Activated naive CD4-positive, alpha-beta T cell treated with anti-CD3 and anti-CD28 coated beads, Interleukin-2, amount 10 ng/mL, durations not matched to agents 7 days and 5 days (primary cell): ENCODE measurements at regions of chr5 and their contacts with region 1.

Region 1: DNA sequence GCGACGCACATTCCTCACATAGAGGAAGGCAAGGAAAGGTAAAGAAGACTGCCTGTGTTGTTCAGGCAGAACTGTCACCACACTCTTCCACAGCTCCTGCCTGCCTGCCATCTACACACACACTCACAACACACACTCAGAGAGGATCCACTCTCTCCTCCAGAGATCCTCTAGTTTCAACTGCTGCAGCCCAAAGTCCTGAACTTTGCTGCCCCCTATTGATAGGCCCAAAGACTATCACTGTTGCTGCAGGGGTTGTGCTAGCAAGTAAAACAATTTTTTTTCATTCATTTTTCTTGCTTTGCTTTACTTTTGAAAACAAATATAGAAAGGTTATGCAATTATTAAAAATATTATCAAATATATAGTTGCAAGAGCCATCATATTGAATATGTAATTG is 5.9 kb upstream of the CFAP90 start:
- DNase-seq: peak; percentile 64
- H3K4me3 Mint-ChIP-seq: no peak overlapping the region
- H3K27ac Mint-ChIP-seq: no peak overlapping the region
- H3K4me1 Mint-ChIP-seq: peaks cover 30% of the 10 kb centered on the region
- H3K27me3 Mint-ChIP-seq: peaks cover 15% of the 10 kb centered on the region

Region 2: GRCh38 chr5:7868773-7869473 is 12.1 kb after region 1 on chr5 and contains the starts of genes FASTKD3 and MTRR:
- CTCF ChIA-PET with region 1: interaction called, 28 read pairs
- DNase-seq: peak; percentile 94
- H3K4me3 Mint-ChIP-seq: peak within 1 kb of the TSS; percentile 86
- H3K27ac Mint-ChIP-seq: peak within 1 kb of the TSS; percentile 92
- H3K4me1 Mint-ChIP-seq: peaks cover 68% of the 10 kb centered on the region
- H3K27me3 Mint-ChIP-seq: no peaks in the 10 kb centered on the region

Region 3: GRCh38 chr5:7910738-7911428 is 54.0 kb after region 1 on chr5:
- CTCF ChIA-PET with region 1: no interaction called
- DNase-seq: no peak
- H3K4me3 Mint-ChIP-seq: no peak overlapping the region
- H3K27ac Mint-ChIP-seq: no peak overlapping the region
- H3K4me1 Mint-ChIP-seq: no peaks in the 10 kb centered on the region
- H3K27me3 Mint-ChIP-seq: no peaks in the 10 kb centered on the region